Activated T-helper 2 cell treated with anti-CD3 and anti-CD28 coated beads, Interferon-gamma antibody, Interleukin-2, Interleukin-4, amounts not matched to agents 10 μg/mL and 5 μg/mL and 100 μg/mL, durations not matched to agents 14 hours and 24 hours and 36 hours (primary cell): ENCODE measurements at regions of chr13 and their contacts with region 1.

Region 1: DNA sequence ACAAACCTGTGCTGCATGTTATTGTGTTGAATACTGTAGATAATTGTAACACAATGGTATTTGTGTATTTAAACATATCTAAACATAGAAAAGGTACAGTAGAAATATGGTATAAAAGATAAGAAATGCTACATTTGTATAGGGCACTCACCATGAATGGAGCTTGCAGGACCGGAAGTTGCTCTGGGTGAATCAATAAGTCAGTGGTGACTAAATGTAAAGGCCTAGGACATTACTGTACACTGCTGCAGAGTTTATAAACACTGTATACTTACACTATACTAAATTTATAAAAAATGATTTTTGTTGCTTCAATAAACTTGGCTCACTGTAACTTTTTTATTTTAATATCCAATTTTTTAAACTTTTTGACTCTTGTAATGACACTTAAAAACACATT is 34.4 kb downstream of the LMO7 start:
- DNase-seq: no peak
- H3K4me3 Mint-ChIP-seq: no peak overlapping the region
- H3K27ac Mint-ChIP-seq: no peak overlapping the region
- H3K4me1 Mint-ChIP-seq: no peaks in the 10 kb centered on the region
- H3K27me3 Mint-ChIP-seq: no peaks in the 10 kb centered on the region

Region 2: DNA sequence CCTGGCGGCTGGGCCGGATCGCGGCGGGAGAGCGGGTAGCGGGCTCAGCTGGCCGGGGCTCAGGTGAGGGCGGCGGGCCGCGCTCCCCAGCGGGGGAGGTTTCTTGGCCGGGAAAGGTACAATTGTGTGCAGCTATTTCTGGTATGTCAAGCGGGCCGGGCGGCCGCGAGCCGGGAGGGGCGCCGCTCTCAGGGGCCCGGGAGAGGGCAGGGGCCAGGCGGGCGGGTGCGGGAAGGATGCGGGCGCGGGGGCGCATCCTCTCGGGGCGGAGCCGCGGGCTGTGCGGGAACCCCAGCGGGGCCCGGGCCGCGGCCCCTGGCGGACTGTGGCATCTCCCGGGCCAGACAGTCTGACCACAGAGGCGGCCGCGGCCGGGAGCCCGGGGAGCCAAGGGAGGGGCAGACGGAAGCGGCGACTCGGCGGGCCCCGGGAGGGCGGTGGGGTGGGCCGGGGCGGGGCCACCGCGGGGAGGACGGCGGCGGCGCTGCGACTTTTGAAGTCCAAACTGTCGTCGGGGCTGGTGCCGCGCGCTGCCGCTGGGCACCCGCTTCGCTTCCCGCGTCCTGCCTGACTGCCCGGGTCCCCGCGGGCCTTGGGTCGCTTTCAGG is 34.6 kb before region 1 on chr13 and contains the start of gene LMO7:
- intact Hi-C with region 1: loop called (anchors 5 kb)
- DNase-seq: peak; percentile 27
- H3K4me3 Mint-ChIP-seq: peak within 1 kb of the TSS; percentile 73
- H3K27ac Mint-ChIP-seq: no peak within 1 kb of the TSS
- H3K4me1 Mint-ChIP-seq: peaks cover 13% of the 10 kb centered on the region
- H3K27me3 Mint-ChIP-seq: peaks cover 36% of the 10 kb centered on the region
- total RNA-seq, gene LMO7: 6.2 and 6.9 TPM in 2 replicates

Region 3: GRCh38 chr13:76538004-76538403 is 867.5 kb after region 1 on chr13:
- intact Hi-C with region 1: no loop called
- DNase-seq: no peak
- H3K4me3 Mint-ChIP-seq: no peak overlapping the region
- H3K27ac Mint-ChIP-seq: no peak overlapping the region
- H3K4me1 Mint-ChIP-seq: no peaks in the 10 kb centered on the region
- H3K27me3 Mint-ChIP-seq: no peaks in the 10 kb centered on the region